ENCODE measurements at regions of chr3 and their contacts with region 1.

Region 1: GRCh38 chr3:38560284-38560683 is 64.1 kb downstream of the EXOG start:
- DNase-seq: no peak
- H3K4me3 ChIP-seq: no peak overlapping the region
- H3K27ac ChIP-seq: no peak overlapping the region
- H3K4me1 ChIP-seq: no peaks in the 10 kb centered on the region
- H3K27me3 ChIP-seq: no peaks in the 10 kb centered on the region
- CTCF ChIP-seq: peak in 2 of 3 experiments; percentile 32 to 37; a peak in 2 of 4 replicates
- EP300 ChIP-seq: no peak
- POLR2A ChIP-seq: no peak
- RAD21 ChIP-seq: no peak

Region 2: GRCh38 chr3:38446085-38446686 is 114.1 kb before region 1 on chr3:
- CTCF ChIA-PET with region 1: no interaction called
- POLR2A ChIA-PET with region 1: no interaction called
- DNase-seq: no peak
- H3K4me3 ChIP-seq: no peak overlapping the region
- H3K27ac ChIP-seq: no peak overlapping the region
- H3K4me1 ChIP-seq: no peaks in the 10 kb centered on the region
- H3K27me3 ChIP-seq: no peaks in the 10 kb centered on the region
- CTCF ChIP-seq: no peak
- EP300 ChIP-seq: no peak
- POLR2A ChIP-seq: no peak
- RAD21 ChIP-seq: no peak

Region 3: GRCh38 chr3:38542401-38543298 is 17.6 kb before region 1 on chr3:
- CTCF ChIA-PET with region 1: interaction called, 13 read pairs
- POLR2A ChIA-PET with region 1: interaction called, 3 read pairs
- DNase-seq: no peak
- H3K4me3 ChIP-seq: no peak overlapping the region
- H3K27ac ChIP-seq: no peak overlapping the region
- H3K4me1 ChIP-seq: no peaks in the 10 kb centered on the region; a peak in 1 of 7 replicates
- H3K27me3 ChIP-seq: no peaks in the 10 kb centered on the region
- CTCF ChIP-seq: no peak
- EP300 ChIP-seq: no peak
- POLR2A ChIP-seq: no peak
- RAD21 ChIP-seq: no peak

Region 4: DNA sequence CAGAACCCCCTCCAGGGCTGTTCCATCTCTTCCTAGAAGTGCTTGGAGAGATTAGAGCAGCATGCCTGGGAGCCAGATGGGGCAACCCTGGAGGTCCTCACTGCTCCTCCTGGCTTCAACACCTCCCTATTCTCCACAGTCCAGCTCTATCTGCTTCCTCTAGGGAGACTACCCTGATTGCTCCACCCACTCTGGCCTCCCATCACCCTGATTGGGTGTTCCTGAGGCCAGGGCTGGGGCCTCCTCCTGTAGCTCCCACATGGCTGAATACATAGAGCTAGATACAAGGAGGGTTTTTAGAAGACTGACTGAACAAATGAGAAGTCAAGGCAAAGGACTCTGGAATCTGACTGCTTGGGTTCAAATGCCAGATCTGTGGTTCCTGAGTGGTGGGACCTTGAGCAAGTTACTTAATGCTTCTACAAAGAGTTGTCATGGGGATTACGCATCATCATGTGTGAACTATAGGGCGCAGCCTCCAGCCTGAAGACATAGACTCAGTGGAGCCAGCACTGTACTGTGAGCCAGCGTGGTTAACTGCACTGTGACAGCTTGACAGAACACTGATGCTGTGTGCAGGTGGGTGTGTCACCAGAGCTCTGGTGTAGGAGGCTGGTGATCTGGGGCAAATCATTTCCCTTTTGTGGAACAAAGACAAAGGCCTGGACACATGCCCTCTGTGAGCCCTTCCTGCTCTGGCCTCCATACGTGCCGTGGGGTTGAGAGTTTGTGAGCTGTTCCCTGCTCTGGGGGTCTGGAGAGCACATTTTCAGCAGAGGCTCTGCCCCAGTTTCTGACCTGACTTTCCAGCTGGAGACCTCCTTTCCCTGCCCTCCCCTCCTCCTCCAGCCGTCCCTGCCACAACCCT is 14.4 kb after region 1 on chr3:
- CTCF ChIA-PET with region 1: interaction called, 15 read pairs
- POLR2A ChIA-PET with region 1: no interaction called
- DNase-seq: peak in 1 of 2 experiments; percentile 37
- H3K4me3 ChIP-seq: no peak overlapping the region
- H3K27ac ChIP-seq: no peak overlapping the region
- H3K4me1 ChIP-seq: peaks cover 0 to 10% (median 0%) of the 10 kb centered on the region in 4 experiments; a peak in 2 of 7 replicates
- H3K27me3 ChIP-seq: no peaks in the 10 kb centered on the region; a peak in 2 of 7 replicates
- CTCF ChIP-seq: no peak
- EP300 ChIP-seq: no peak
- POLR2A ChIP-seq: no peak
- RAD21 ChIP-seq: no peak

Region 5: GRCh38 chr3:38616111-38616510 is 55.8 kb after region 1 on chr3:
- CTCF ChIA-PET with region 1: interaction called, 16 read pairs
- POLR2A ChIA-PET with region 1: no interaction called
- DNase-seq: no peak
- H3K4me3 ChIP-seq: no peak overlapping the region
- H3K27ac ChIP-seq: no peak overlapping the region
- H3K4me1 ChIP-seq: peaks cover 5 to 9% (median 5%) of the 10 kb centered on the region in 4 experiments
- H3K27me3 ChIP-seq: no peaks in the 10 kb centered on the region
- CTCF ChIP-seq: no peak
- EP300 ChIP-seq: no peak
- POLR2A ChIP-seq: no peak
- RAD21 ChIP-seq: no peak